ENCODE measurements at regions of chr15 and their contacts with region 1.

Region 1: GRCh38 chr15:41230650-41231533 is at the starts of genes CHP1 and EXD1:
- H3K4me3 ChIP-seq: peak within 1 kb of the TSS; percentile 97
- H3K27ac ChIP-seq: peak within 1 kb of the TSS; percentile 41; the same call in 1 of the 2 replicates
- H3K4me1 ChIP-seq: no peaks in the 10 kb centered on the region
- CTCF ChIP-seq: peak; percentile 94

Region 2: DNA sequence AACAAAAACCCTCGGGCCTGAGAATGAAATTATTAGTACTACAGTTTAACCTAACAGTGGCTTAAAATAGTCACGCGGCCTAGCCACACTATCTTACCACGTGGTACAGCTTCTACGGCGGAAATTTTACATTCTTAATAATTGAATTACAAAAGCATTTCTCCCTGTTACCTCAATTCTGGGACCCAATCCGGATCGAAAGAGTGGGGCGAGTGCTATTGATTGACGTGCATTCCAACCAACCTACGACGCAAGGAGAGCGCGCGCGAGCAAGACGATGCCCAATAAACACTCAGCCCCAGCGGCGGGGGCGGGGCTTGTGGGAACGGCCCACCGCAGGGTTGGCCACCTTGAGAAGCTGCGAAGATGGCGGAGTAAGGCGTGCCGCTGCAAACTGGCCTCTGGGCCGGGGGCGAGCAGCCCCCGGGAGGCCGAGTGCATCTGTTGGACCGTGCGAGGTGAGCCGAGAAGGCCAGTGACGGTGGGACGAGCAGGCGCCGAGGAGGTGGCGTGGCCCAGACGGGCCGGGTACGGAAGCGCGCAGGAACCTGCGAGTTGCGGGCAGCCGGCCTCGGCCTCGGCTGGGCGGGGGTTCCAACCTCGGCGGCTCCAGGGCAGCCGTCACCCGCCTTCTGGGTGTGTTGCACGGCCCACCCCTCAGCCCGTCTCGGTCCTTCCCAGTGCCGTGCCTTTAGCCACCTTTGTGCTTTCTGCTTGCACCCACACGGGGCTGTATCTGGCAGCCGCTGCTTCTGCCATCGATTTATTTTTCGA is 52.9 kb after region 1 on chr15:
- CTCF ChIA-PET with region 1: interaction called, 3 read pairs
- POLR2A ChIA-PET with region 1: interaction called, 10 read pairs
- H3K4me3 ChIP-seq: peak overlapping the region; percentile 89
- H3K27ac ChIP-seq: peak overlapping the region; percentile 85
- H3K4me1 ChIP-seq: no peaks in the 10 kb centered on the region
- CTCF ChIP-seq: peak; percentile 12; the same call in 1 of the 2 replicates

Region 3: GRCh38 chr15:41331833-41332787 is 101.2 kb after region 1 on chr15 and contains the start of gene OIP5:
- CTCF ChIA-PET with region 1: no interaction called
- POLR2A ChIA-PET with region 1: interaction called, 13 read pairs
- H3K4me3 ChIP-seq: peak within 1 kb of the TSS; percentile 94
- H3K27ac ChIP-seq: peak within 1 kb of the TSS; percentile 92
- H3K4me1 ChIP-seq: no peaks in the 10 kb centered on the region
- CTCF ChIP-seq: peak; percentile 88

Region 4: GRCh38 chr15:41512940-41513510 is 282.1 kb after region 1 on chr15:
- CTCF ChIA-PET with region 1: no interaction called
- POLR2A ChIA-PET with region 1: no interaction called
- H3K4me3 ChIP-seq: peak overlapping the region; percentile 28
- H3K27ac ChIP-seq: no peak overlapping the region
- H3K4me1 ChIP-seq: no peaks in the 10 kb centered on the region
- CTCF ChIP-seq: no peak